Common myeloid progenitor, CD34-positive (primary cell): ENCODE measurements at regions of chr11 and their contacts with region 1.

Region 1: DNA sequence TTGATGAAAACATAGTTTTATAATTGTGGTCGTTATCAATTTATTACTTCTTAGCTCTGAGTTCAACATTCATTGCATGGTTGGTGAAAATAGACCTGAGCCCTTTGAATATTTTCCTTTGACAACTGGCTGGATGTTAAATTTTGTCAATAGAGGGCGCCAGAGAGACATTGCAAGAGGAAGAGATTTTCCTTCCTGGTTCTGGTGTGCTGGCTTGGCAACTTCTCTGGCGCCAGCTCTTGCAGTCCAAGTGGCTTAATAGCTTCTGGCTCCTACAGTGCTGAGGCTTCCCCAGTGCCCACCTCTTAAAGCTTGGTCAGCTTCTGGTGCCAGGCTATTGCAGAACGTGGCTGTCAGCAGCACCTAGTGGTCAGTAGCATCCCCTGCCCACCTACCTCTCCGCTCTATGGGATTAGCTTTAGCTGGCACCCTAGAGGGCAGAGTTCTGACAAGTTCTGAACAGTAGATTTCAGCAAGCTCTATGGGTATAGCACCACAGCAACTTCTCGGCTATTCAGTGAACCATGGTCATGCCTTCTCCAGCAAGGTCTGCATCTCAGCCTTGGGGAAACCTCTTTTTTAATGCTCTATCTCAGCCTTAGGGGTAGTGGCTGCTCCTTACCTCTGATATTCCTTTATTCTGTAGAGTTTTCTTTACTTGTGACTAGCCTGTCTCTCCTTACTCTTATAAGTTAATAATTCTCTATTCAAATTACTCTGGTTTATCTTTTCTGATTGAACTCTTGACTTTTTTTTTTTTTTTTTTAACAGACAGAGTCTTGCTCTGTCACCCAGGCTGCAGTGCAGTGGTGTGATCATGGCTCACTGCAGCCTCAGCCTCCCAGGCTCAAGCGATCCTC is 59.4 kb downstream of the ACER3 start:
- DNase-seq: peak; percentile 83 to 92 (median 91)
- H3K4me3 ChIP-seq: peak overlapping the region in 6 of 7 experiments; percentile 10 to 72 (median 58)
- H3K27ac ChIP-seq: no peak overlapping the region
- H3K4me1 ChIP-seq: peaks cover 0 to 9% (median 2%) of the 10 kb centered on the region in 4 experiments
- H3K27me3 ChIP-seq: no peaks in the 10 kb centered on the region

Region 2: GRCh38 chr11:76799066-76799804 is 120.9 kb before region 1 on chr11:
- CTCF ChIA-PET with region 1: interaction called, 26 read pairs
- POLR2A ChIA-PET with region 1: no interaction called
- DNase-seq: peak; percentile 72 to 87 (median 86)
- H3K4me3 ChIP-seq: peak overlapping the region in 5 of 7 experiments; percentile 6 to 74 (median 46)
- H3K27ac ChIP-seq: no peak overlapping the region
- H3K4me1 ChIP-seq: peaks cover 0 to 10% (median 9%) of the 10 kb centered on the region in 4 experiments
- H3K27me3 ChIP-seq: peaks cover 0 to 2% (median 0%) of the 10 kb centered on the region in 5 experiments

Region 3: GRCh38 chr11:76823481-76824078 is 96.5 kb before region 1 on chr11:
- CTCF ChIA-PET with region 1: interaction called, 13 read pairs
- POLR2A ChIA-PET with region 1: no interaction called
- DNase-seq: no peak
- H3K4me3 ChIP-seq: no peak overlapping the region
- H3K27ac ChIP-seq: peak overlapping the region in 1 of 2 experiments; percentile 80
- H3K4me1 ChIP-seq: peaks cover 0 to 24% (median 8%) of the 10 kb centered on the region in 4 experiments
- H3K27me3 ChIP-seq: no peaks in the 10 kb centered on the region

Region 4: DNA sequence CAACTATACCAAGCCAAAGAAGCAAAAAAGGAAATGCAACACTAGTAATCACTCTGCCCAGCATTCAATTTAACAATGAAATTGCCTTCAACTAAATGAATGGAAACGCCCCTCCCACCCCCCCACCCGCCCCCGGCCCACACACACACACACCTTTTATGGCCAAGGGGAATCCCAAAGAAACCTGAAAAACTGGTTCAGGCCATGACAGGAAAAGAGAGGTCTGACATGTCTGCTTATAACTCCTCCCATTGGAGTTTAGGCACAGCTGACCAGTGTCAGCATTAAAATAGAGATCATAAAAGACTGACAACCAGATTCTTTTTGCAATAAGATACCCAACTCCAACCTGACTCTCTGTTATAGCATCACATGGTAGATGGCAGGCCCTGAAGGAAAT is 16.8 kb before region 1 on chr11:
- CTCF ChIA-PET with region 1: interaction called, 49 read pairs
- POLR2A ChIA-PET with region 1: no interaction called
- DNase-seq: no peak
- H3K4me3 ChIP-seq: no peak overlapping the region
- H3K27ac ChIP-seq: no peak overlapping the region
- H3K4me1 ChIP-seq: no peaks in the 10 kb centered on the region
- H3K27me3 ChIP-seq: no peaks in the 10 kb centered on the region

Region 5: DNA sequence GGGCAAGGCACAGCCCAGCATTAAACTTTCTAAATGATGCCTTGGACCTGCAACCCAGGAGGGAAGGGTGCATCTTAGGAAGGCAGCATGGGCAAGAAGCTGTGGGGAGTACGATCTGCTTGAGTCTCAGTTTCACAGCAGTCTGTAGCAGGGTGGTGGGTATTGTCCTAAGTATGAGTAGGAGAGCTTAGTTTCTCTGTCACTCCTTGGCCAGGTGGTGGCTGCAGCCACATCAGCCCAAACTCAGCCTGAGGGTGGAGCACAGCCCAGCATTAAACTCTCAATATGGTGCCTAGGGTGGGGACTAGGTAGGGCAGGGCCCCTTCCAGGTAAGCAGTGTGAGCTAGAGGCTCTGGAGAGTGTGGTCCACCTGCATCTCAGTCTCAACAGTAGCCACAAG is 26.1 kb after region 1 on chr11:
- CTCF ChIA-PET with region 1: no interaction called
- POLR2A ChIA-PET with region 1: no interaction called
- DNase-seq: no peak
- H3K4me3 ChIP-seq: no peak overlapping the region
- H3K27ac ChIP-seq: no peak overlapping the region
- H3K4me1 ChIP-seq: no peaks in the 10 kb centered on the region
- H3K27me3 ChIP-seq: no peaks in the 10 kb centered on the region

Region 6: DNA sequence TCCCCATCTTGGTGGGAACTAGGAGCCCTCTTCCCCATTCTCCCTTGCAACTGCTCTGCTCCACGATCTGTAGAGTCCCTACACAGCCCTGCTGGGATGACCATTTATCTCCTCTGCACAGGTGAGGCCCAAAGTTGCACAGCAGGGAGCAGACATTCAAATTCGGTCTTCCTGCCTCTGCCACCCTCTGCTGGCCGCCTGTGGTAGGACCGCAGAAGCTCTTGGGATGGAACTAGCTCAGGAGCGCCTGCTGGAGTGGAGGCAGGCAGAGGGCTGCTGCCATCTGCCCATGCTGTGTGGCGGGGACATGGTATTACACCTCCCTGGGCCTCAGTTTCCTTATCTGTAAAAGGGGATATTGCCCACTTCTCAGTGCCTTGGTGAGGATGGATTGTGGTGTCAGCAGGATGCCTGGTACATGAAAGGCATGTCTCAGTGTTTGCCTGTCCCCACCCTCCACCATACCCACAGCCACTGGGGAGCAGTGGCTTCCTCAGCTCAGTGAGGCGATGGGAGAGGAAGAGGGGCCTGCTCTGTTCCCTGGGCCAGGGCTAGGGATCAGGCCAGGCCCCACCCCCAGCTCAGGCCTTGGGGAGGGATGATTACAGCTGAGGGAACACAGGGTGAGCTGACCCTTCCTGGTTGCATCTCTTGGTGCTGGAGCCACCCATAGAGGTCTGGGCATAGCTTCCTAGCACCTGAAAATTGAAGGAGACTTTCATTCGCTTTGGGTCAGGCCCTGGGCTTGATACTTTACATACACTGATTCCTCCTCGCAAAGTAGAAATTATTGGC is 171.2 kb after region 1 on chr11:
- CTCF ChIA-PET with region 1: interaction called, 11 read pairs
- POLR2A ChIA-PET with region 1: no interaction called
- DNase-seq: peak; percentile 70 to 81 (median 79)
- H3K4me3 ChIP-seq: no peak overlapping the region
- H3K27ac ChIP-seq: no peak overlapping the region
- H3K4me1 ChIP-seq: peaks cover 0 to 6% (median 3%) of the 10 kb centered on the region in 4 experiments
- H3K27me3 ChIP-seq: no peaks in the 10 kb centered on the region